ENCODE measurements at regions of chr16 and their contacts with region 1.

Region 1: GRCh38 chr16:50326949-50327402 is 41.8 kb downstream of the BRD7 start:
- DNase-seq: peak in 1 of 2 experiments; percentile 53
- H3K4me3 ChIP-seq: no peak overlapping the region
- H3K4me3 Mint-ChIP-seq: no peak overlapping the region
- H3K27ac Mint-ChIP-seq: no peak overlapping the region
- H3K4me1 ChIP-seq: peaks cover 14% of the 10 kb centered on the region
- H3K4me1 Mint-ChIP-seq: peaks cover 30% of the 10 kb centered on the region
- H3K27me3 ChIP-seq: no peaks in the 10 kb centered on the region
- H3K27me3 Mint-ChIP-seq: no peaks in the 10 kb centered on the region
- CTCF ChIP-seq: peak; percentile 57 to 76

Region 2: DNA sequence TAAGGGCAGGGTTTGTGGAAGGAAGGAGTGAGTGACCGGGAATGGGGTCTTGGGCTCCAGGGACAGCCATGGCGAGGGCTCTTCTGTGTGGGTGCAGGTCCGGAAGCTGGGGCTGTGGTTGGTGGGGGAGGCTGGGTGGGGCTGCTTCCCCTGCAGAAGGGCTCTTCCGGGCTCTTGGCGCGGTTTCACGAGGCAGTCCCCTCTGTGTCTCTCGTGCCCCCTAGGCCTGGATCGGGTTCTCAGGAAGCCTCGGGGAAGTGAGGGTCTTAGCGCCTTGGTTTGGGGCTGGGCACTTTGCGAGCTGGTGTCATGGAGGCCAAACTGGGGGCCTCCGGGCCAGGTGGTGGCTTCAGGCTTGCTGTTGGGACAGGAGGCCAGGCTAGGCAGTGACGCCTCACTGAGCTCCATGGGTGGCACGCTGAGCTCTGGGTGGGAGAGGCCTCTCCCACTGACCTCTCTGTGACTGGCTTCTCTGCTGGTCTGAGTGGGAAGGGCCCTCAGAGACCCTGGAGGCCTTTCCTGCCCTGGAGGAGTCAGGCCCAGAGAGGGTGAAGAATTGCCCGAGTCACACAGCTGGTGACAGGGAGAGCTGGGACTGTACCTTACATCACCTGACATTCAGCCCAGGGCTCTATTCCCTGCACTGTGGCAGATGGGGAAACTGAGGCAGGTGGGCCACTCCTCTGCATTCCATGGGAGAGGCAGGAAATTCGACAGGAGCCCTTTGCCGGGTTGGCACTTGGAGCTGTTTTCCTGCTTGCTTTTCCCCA is 52.5 kb before region 1 on chr16:
- CTCF ChIA-PET with region 1: interaction called, 10 read pairs
- POLR2A ChIA-PET with region 1: no interaction called
- intact Hi-C with region 1: no loop called
- DNase-seq: no peak
- H3K4me3 ChIP-seq: no peak overlapping the region
- H3K4me3 Mint-ChIP-seq: no peak overlapping the region
- H3K27ac Mint-ChIP-seq: no peak overlapping the region
- H3K4me1 ChIP-seq: 0 out of 2 replicates have a peak, but pooled peaks cover 3% of the 10 kb centered on the region
- H3K4me1 Mint-ChIP-seq: no peaks in the 10 kb centered on the region
- H3K27me3 ChIP-seq: no peaks in the 10 kb centered on the region
- H3K27me3 Mint-ChIP-seq: no peaks in the 10 kb centered on the region
- CTCF ChIP-seq: no peak

Region 3: GRCh38 chr16:50354629-50355456 is 27.9 kb after region 1 on chr16:
- CTCF ChIA-PET with region 1: interaction called, 12 read pairs
- POLR2A ChIA-PET with region 1: no interaction called
- intact Hi-C with region 1: no loop called
- DNase-seq: no peak
- H3K4me3 ChIP-seq: no peak overlapping the region
- H3K4me3 Mint-ChIP-seq: no peak overlapping the region
- H3K27ac Mint-ChIP-seq: no peak overlapping the region
- H3K4me1 ChIP-seq: no peaks in the 10 kb centered on the region
- H3K4me1 Mint-ChIP-seq: no peaks in the 10 kb centered on the region
- H3K27me3 ChIP-seq: no peaks in the 10 kb centered on the region
- H3K27me3 Mint-ChIP-seq: no peaks in the 10 kb centered on the region
- CTCF ChIP-seq: peak; percentile 60 to 72

Region 4: DNA sequence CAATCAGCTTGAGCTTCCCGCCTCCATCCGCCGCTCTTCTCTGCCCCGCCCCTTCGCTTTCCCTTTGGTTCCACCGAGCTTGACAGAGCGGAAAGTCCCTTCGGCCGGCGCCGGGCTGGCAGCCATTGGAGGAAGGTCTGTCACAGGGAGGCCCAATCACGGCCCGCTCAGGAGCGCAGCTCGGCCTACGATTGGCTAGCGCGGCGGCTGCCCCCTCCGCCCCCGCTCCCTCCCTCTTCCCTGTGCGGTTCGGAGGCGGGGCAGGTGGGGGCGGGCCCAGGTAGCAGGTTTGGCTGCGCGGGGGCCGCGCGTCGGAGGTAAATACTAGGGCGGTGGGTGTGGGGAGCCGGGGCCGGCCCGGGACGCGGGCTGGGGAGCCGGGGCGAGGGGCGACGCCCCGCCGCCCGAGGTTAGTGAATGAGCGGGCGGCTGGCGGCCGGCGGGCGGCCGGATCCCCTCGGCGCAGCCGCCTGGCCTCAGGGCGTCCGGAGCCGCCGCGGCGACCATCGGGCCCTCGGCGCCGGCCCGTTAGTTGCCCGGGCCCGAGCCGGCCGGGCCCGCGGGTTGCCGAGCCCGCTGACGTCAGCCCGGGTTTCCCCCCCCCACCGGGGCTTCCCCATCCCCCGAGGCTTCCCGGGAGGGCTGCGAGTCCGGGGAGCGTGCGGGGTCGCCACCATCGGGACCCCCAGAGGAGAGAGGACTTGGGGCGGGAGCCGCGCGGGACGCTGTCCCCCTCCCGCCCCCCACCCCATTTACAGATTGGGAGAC is 415.0 kb after region 1 on chr16 and contains the start of gene CYLD:
- CTCF ChIA-PET with region 1: no interaction called
- POLR2A ChIA-PET with region 1: no interaction called
- intact Hi-C with region 1: loop called (anchors 10 kb)
- DNase-seq: peak; percentile 100
- H3K4me3 ChIP-seq: peak within 1 kb of the TSS; percentile 76
- H3K4me3 Mint-ChIP-seq: peak within 1 kb of the TSS; percentile 78
- H3K27ac Mint-ChIP-seq: no peak within 1 kb of the TSS
- H3K4me1 ChIP-seq: no peaks in the 10 kb centered on the region; the same call in 1 of the 2 replicates
- H3K4me1 Mint-ChIP-seq: no peaks in the 10 kb centered on the region
- H3K27me3 ChIP-seq: peaks cover 1% of the 10 kb centered on the region; the same call in 1 of the 2 replicates
- H3K27me3 Mint-ChIP-seq: peaks cover 8% of the 10 kb centered on the region
- CTCF ChIP-seq: no peak
- total RNA-seq, gene CYLD: 9.8 and 13.1 TPM in 2 replicates